Activated T-helper 1 cell treated with anti-CD3 and anti-CD28 coated beads, Interleukin-12 subunit alpha, Interleukin-12 subunit beta, Interleukin-2, Interleukin-4 antibody, amounts not matched to agents 30 ng/mL and 10 ng/mL and 1 ng/mL, durations not matched to agents 14 hours and 24 hours and 36 hours (primary cell): ENCODE measurements at regions of chr20 and their contacts with region 1.

Region 1: GRCh38 chr20:43187476-43188233 is 2.1 kb downstream of the PTPRT start:
- DNase-seq: peak; percentile 42
- H3K4me3 Mint-ChIP-seq: no peak overlapping the region
- H3K27ac Mint-ChIP-seq: no peak overlapping the region
- H3K4me1 Mint-ChIP-seq: no peaks in the 10 kb centered on the region
- H3K27me3 Mint-ChIP-seq: peaks cover 35% of the 10 kb centered on the region

Region 2: GRCh38 chr20:43408848-43409576 is 221.4 kb after region 1 on chr20:
- intact Hi-C with region 1: loop called (anchors 2 kb)
- DNase-seq: no peak
- H3K4me3 Mint-ChIP-seq: no peak overlapping the region
- H3K27ac Mint-ChIP-seq: no peak overlapping the region
- H3K4me1 Mint-ChIP-seq: no peaks in the 10 kb centered on the region
- H3K27me3 Mint-ChIP-seq: peaks cover 19% of the 10 kb centered on the region